ENCODE measurements at regions of chr2 and their contacts with region 1.

Region 1: GRCh38 chr2:97697252-97698235 is 15.8 kb upstream of the ZAP70 start:
- DNase-seq: peak; percentile 63 to 79
- ATAC-seq: peak; percentile 85 to 92; a peak in 5 of 6 replicates
- H3K4me3 ChIP-seq: no peak overlapping the region
- H3K27ac ChIP-seq: no peak overlapping the region
- H3K4me1 ChIP-seq: no peaks in the 10 kb centered on the region
- CTCF ChIP-seq: peak; percentile 95
- EP300 ChIP-seq: no peak
- POLR2A ChIP-seq: no peak
- RAD21 ChIP-seq: peak; percentile 99

Region 2: DNA sequence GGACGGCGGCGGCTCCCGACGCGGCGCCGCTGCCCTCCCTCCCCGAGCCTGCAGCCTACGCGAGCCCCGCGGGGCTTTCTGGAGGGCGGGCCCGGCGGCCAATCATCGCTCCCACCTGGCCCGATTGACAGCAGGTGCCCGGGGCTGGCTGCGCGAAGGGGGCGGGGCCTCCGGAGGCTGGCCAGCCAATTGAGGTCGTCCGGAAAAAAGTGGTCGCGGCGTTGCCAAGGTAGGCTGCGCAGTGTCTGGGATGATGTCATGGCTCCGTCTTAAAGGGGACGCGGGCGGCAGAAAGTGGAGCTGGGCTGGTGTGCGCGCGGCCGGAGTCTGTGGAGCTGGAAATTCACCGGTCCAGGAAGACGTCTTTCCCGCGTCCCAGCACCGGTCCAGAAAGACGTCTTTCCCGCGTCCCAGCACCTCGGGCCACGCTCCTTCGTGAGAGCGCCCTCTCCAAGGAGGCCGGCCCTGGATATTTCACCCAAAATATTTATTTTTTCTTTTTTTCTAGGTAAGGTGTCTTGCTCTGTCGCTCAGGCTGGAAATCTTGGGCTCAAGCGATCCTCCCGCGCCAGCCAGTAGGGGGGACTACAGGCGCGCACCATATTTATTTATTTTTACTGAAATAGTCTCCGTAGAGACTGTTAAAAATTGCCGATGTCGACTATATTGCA is 33.4 kb before region 1 on chr2 and contains the start of gene ACTR1B:
- CTCF ChIA-PET with region 1: interaction called, 93 read pairs
- POLR2A ChIA-PET with region 1: interaction called, 3 read pairs
- DNase-seq: peak; percentile 85 to 98
- ATAC-seq: peak; percentile 90 to 95
- H3K4me3 ChIP-seq: peak within 1 kb of the TSS; percentile 95
- H3K27ac ChIP-seq: peak within 1 kb of the TSS; percentile 96 to 97
- H3K4me1 ChIP-seq: peaks cover 9% of the 10 kb centered on the region
- CTCF ChIP-seq: peak; percentile 61
- EP300 ChIP-seq: no peak
- POLR2A ChIP-seq: peak; percentile 65
- RAD21 ChIP-seq: peak; percentile 30 to 46; a peak in 3 of 5 replicates
- polyA plus RNA-seq, gene ACTR1B: 24.7 and 30.0 TPM in 2 replicates

Region 3: DNA sequence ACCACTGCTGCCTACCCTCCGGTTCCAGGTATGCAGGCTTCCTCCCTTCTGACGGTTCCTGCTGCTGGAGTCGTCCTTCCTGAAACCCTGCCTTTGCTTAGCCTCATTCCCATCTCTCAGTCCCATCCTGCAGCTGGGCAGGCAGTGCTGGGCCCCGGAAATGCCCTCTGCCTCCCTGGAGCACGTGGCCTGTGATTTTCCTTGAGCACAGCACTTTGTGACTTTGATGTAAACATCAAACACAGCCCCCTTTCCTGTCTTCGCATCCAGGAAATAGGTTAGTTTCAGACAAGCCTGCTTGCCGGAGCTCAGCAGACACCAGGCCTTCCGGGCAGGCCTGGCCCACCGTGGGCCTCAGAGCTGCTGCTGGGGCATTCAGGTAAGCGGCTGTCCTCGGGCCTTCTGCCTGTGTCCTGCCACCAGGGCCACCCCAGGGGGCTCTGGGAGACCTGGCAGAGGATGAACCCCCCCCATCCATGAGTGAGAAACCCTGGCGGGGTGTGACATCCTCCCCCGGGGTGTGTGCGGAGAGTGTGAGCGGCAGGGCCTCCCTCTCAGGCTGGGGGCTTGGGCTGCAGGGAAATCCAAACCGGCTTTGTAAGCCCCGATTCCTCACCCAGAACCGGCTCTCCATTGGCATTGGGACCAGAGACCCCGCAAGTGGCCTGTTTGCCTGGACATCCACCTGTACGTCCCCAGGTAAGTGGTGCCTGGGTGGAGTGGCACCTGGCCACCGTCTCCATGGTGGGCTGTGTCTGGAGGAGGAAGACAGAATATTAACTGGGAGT is 15.9 kb after region 1 on chr2 and contains the start of gene ZAP70:
- CTCF ChIA-PET with region 1: interaction called, 106 read pairs
- POLR2A ChIA-PET with region 1: no interaction called
- DNase-seq: no peak
- ATAC-seq: no peak
- H3K4me3 ChIP-seq: no peak within 1 kb of the TSS
- H3K27ac ChIP-seq: no peak within 1 kb of the TSS
- H3K4me1 ChIP-seq: no peaks in the 10 kb centered on the region
- CTCF ChIP-seq: no peak
- EP300 ChIP-seq: no peak
- POLR2A ChIP-seq: no peak
- RAD21 ChIP-seq: no peak
- polyA plus RNA-seq, gene ZAP70: 0.04 TPM in 1 of 2 replicates, not detected in the other

Region 4: DNA sequence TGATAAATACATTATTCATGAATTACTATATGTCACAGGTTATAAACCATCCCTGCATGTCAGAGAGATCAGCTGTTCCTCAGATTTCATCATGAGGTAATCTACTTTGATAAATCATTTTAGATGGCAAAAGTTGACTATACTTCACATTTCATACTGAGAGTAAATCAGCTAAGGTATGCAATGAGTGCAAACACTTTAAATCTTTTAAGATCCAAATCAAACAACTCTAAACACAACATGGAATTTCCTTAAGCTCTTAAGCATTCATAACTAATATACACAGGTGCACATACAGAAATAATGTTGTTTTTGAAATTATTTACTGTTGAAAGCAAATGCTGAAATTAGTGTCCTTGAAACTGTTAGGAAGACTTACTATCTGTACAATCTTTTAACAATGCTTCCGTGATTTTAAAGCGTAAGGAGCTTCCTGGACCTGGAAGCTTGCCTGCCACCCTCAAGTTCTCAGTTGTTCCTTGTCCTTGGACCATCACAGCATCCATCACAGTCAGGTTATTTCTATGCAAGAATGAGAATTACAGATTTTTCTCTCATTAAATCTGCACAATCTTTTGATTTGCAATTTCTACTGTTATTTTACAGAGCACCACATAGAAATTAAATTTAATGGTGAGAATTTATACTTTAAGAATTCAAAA is 99.1 kb after region 1 on chr2:
- CTCF ChIA-PET with region 1: no interaction called
- POLR2A ChIA-PET with region 1: no interaction called
- DNase-seq: no peak
- ATAC-seq: no peak
- H3K4me3 ChIP-seq: no peak overlapping the region
- H3K27ac ChIP-seq: no peak overlapping the region
- H3K4me1 ChIP-seq: no peaks in the 10 kb centered on the region
- CTCF ChIP-seq: no peak
- EP300 ChIP-seq: no peak
- POLR2A ChIP-seq: no peak
- RAD21 ChIP-seq: no peak

Region 5: DNA sequence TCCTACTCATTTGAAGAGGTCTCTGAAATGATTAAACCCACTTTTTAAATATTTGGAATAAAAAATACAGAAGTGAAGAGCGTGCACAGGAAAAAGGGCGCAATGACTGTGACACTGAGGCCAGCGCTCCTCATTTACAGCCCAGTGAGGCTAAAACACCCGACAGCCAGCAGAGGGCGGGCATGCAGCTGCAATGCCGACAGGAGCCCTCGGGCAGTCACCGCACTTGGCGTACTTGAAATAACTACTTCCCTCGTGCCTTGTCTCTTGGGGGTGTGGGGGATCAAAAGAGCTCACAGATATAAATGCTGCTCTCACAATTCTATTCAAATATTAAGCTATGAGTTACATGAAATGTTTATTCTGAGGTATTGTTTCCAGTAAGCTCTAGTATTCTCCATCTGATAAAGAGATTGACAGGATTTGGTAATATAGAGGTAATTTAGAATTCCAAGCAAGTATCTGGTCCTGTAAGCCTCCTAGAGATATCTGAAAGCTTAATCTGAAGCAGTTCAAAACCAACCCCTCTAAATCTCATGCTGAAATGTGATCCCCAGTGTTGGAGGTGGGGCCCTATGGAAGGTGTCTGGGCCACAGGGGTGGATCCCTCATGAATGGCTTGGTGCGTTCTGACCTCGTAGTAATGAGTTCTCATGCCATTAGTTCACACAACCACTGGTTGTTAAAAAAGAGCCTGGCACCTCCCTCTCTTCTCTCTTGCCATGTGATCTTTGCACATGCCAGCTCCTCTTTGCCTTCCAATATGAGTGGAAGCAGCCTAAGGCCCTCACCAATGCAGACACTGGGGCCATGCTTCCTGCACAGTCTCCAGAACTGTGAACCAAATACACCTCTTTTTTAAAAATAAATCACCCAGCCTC is 109.4 kb after region 1 on chr2:
- CTCF ChIA-PET with region 1: interaction called, 10 read pairs
- POLR2A ChIA-PET with region 1: no interaction called
- DNase-seq: peak; percentile 34 to 72
- ATAC-seq: peak; percentile 98 to 100
- H3K4me3 ChIP-seq: no peak overlapping the region
- H3K27ac ChIP-seq: no peak overlapping the region
- H3K4me1 ChIP-seq: no peaks in the 10 kb centered on the region
- CTCF ChIP-seq: peak; percentile 87
- EP300 ChIP-seq: no peak
- POLR2A ChIP-seq: no peak
- RAD21 ChIP-seq: peak; percentile 94

Region 6: GRCh38 chr2:97849881-97850528 is 152.5 kb after region 1 on chr2:
- CTCF ChIA-PET with region 1: no interaction called
- POLR2A ChIA-PET with region 1: no interaction called
- DNase-seq: no peak
- ATAC-seq: no peak
- H3K4me3 ChIP-seq: no peak overlapping the region
- H3K27ac ChIP-seq: no peak overlapping the region
- H3K4me1 ChIP-seq: peaks cover 12% of the 10 kb centered on the region
- CTCF ChIP-seq: no peak
- EP300 ChIP-seq: no peak
- POLR2A ChIP-seq: no peak
- RAD21 ChIP-seq: no peak

Region 7: DNA sequence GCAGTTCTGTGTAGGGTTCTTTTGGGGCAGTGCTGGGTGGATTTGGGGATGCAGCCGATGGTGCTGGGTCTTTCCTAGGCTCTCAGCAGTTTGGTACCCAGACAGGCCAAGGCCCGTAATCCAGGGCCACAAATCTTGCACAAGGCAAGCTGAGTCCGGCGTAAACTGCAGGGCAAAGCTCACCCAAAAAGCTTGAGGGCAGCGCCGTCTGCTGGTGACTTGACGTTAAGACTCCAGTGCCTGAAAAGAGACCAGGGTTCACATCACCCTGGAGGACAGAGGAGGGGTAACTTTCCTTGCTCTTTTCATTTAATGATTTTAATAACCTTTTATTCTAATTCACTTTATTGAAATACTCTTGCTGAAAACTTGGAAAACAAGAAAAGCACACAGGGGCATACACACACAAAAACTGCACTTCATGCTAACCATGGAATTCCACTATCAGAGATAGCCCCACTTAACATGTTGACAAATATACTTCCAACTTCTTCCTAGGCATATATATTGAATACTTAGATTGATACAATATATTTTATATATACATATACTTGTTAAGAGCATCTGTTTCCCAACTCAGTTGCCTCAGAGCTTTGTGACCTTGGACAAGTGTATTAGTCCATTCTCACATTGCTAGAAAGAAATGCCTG is 687.6 kb after region 1 on chr2:
- CTCF ChIA-PET with region 1: interaction called, 61 read pairs
- POLR2A ChIA-PET with region 1: no interaction called
- DNase-seq: peak; percentile 76 to 78
- ATAC-seq: peak; percentile 87 to 98
- H3K4me3 ChIP-seq: no peak overlapping the region
- H3K27ac ChIP-seq: no peak overlapping the region
- H3K4me1 ChIP-seq: no peaks in the 10 kb centered on the region
- CTCF ChIP-seq: peak; percentile 95
- EP300 ChIP-seq: no peak
- POLR2A ChIP-seq: no peak
- RAD21 ChIP-seq: peak; percentile 97 to 99